Cardiac septum (tissue), 1 donor: ENCODE measurements at regions of chr9 and their contacts with region 1.

Region 1: GRCh38 chr9:102855641-102856040 is 139.5 kb upstream of the CYLC2 start:
- DNase-seq: no peak

Region 2: DNA sequence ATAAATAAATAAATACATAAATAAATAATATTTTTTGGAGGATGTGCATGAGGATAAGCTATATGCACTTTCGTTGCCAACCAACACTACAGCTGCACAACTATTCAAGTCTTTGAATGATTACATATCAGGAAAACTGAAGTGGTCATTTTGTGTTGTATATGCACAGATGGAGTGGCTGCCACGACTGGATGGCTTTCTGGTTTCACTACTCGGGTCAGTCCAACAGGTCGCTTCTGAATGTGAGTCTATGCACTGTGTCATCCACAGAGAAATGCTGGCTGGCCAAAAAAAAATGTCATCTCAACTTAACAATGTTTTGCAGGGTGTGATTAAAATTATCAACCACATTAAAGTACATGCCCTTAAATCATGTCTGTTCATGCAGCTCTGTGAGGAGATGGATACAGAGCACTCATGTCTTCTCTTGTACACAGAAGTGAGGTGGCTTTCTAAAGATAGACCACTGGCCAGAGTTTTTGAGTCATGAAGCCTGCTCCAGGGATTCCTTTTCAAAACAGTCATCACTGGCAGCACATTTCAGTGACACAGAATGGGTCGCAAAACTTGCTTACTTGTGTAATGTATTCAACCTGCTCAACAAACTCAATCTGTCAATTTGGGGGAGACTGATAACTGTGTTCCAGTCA is 450.3 kb before region 1 on chr9:
- intact Hi-C with region 1: loop called (anchors 10 kb)
- DNase-seq: no peak

Region 3: DNA sequence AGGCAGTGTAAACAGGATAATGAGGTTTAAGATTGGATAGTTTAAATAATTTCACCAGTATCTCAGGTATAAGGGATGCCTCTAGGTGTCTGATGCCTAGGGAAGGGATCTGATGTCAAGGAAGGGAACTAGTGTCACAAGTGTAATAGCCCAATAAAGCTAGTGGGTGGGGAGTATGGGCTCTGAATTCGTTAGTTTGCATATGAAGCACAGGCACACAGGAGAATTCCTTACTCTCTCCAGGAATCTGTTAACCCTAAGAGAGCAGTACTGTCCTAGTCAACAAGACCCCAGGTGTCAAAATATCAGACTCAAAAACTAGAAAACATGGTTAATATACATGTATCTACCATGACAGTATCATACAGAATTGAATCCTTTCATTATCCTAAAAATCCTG is 213.0 kb before region 1 on chr9:
- intact Hi-C with region 1: no loop called
- DNase-seq: no peak

Region 4: DNA sequence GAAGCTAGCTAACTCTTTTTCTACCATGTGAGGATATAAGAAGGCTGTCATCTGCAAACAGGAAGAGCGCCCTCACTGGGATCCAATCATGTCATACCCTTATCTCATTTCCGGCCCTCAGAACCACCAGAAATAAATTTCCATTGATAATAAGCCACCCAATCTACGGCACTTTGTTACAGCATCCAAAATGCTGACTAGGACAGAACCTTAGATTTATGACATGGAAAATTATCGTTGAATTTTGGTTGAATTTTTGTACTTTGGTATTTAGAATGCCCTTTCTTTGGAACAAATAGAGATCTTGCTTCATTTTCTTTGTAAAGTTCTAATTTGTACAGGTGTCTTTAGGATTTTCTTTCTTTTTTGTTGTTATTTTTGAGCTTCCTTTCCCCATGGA is 86.2 kb after region 1 on chr9:
- intact Hi-C with region 1: no loop called
- DNase-seq: no peak